Activated CD4-positive, alpha-beta memory T cell treated with anti-CD3 and anti-CD28 coated beads for 36 hours (primary cell): ENCODE measurements at regions of chr14 and their contacts with region 1.

Region 1: GRCh38 chr14:34714320-34715126 is at the start of gene CFL2:
- DNase-seq: peak; percentile 79
- H3K4me3 Mint-ChIP-seq: peak within 1 kb of the TSS; percentile 94
- H3K27ac Mint-ChIP-seq: peak within 1 kb of the TSS; percentile 89
- H3K4me1 Mint-ChIP-seq: peaks cover 24% of the 10 kb centered on the region
- H3K27me3 Mint-ChIP-seq: peaks cover 1% of the 10 kb centered on the region
- total RNA-seq, gene CFL2: 7.6 to 8.8 TPM

Region 2: DNA sequence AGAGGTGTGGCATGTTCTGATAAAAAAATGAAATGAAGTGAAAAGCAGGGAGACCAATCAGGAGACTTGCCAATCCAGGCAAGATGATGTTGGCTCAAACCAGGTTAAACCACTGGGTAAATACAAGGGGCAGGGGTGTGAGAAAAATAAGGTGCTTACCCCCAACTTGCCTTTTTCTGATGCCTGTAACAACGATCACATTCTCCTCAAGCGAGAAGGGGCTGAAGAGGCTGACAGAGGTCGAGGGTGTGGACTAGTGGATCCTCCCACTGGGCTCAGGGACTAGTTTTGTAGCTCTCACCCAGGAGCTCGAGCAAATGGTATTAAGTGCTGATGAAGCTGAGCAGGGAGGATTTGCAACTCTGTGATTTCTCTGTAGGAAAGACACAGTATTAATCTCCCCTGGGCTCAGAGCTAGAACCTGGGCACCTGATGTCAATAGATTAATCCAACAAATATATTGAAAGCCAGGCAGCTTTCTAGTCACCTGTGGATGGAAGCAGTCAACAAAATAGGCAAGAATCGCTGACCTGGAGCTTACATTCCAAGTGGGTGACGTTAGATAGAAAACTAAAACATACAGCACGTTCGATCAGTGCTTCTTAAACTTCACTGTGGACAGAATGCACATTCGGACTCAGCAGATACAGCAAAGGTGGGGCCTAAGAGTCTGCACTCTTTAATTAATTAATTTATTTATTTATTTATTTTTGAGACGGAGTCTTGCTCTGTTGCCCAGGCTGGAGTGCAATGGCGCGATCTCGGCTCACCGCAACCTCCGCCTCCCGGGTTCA is 159.8 kb before region 1 on chr14:
- CTCF ChIA-PET with region 1: no interaction called
- POLR2A ChIA-PET with region 1: no interaction called
- intact Hi-C with region 1: no loop called
- DNase-seq: peak; percentile 13
- H3K4me3 Mint-ChIP-seq: peak overlapping the region; percentile 38
- H3K27ac Mint-ChIP-seq: peak overlapping the region; percentile 36
- H3K4me1 Mint-ChIP-seq: peaks cover 18% of the 10 kb centered on the region
- H3K27me3 Mint-ChIP-seq: no peaks in the 10 kb centered on the region

Region 3: DNA sequence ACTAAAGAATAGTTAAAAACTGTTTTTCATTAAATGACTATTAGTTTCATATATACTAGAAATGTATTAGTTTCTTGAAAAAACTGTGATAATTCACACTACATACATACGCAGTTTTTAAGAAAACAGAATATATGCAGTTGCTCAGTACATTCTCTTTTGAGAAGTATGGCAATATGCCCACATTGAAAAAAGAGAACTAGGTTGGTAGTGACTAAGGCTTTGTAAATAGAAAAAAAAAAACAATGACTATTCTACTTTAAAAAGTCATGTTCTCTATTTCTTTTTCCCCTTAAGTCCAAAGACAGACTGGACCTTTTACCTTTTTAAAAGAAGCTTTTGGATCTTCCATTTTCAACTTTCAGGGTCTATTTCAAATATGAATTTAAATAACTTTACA is 109.5 kb before region 1 on chr14:
- CTCF ChIA-PET with region 1: no interaction called
- POLR2A ChIA-PET with region 1: no interaction called
- intact Hi-C with region 1: no loop called
- DNase-seq: no peak
- H3K4me3 Mint-ChIP-seq: no peak overlapping the region
- H3K27ac Mint-ChIP-seq: no peak overlapping the region
- H3K4me1 Mint-ChIP-seq: peaks cover 3% of the 10 kb centered on the region
- H3K27me3 Mint-ChIP-seq: no peaks in the 10 kb centered on the region

Region 4: GRCh38 chr14:34629657-34630529 is 84.6 kb before region 1 on chr14 and contains the start of gene SNX6:
- CTCF ChIA-PET with region 1: no interaction called
- POLR2A ChIA-PET with region 1: no interaction called
- intact Hi-C with region 1: loop called (anchors 1 kb)
- DNase-seq: peak; percentile 89
- H3K4me3 Mint-ChIP-seq: peak within 1 kb of the TSS; percentile 90
- H3K27ac Mint-ChIP-seq: peak within 1 kb of the TSS; percentile 87
- H3K4me1 Mint-ChIP-seq: peaks cover 29% of the 10 kb centered on the region
- H3K27me3 Mint-ChIP-seq: peaks cover 2% of the 10 kb centered on the region
- total RNA-seq, gene SNX6: 82.0 to 86.9 TPM

Region 5: GRCh38 chr14:34671716-34672115 is 42.8 kb before region 1 on chr14:
- CTCF ChIA-PET with region 1: interaction called, 38 read pairs
- POLR2A ChIA-PET with region 1: no interaction called
- intact Hi-C with region 1: loop called (anchors 2 kb)
- DNase-seq: no peak
- H3K4me3 Mint-ChIP-seq: no peak overlapping the region
- H3K27ac Mint-ChIP-seq: no peak overlapping the region
- H3K4me1 Mint-ChIP-seq: peaks cover 3% of the 10 kb centered on the region
- H3K27me3 Mint-ChIP-seq: no peaks in the 10 kb centered on the region

Region 6: DNA sequence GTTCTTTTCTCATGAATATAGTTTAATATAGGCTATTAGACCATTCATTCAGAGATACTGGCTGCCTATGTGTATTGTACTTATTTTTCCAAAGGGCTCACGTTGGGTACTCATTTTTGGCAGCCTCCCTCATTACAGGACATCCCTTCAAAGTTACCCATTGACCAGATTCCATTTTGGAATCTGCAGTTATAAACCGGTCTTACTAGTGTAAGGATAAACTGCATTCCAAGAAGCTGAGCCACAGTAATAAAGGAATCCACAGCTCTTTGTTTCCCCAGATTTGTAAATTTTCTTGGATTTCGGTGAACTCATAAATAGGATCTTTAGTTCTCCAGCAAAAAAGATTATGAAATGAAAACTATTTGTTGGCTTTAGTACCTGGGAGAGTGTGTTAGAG is 18.7 kb after region 1 on chr14:
- CTCF ChIA-PET with region 1: no interaction called
- POLR2A ChIA-PET with region 1: no interaction called
- intact Hi-C with region 1: no loop called
- DNase-seq: no peak
- H3K4me3 Mint-ChIP-seq: no peak overlapping the region
- H3K27ac Mint-ChIP-seq: no peak overlapping the region
- H3K4me1 Mint-ChIP-seq: no peaks in the 10 kb centered on the region
- H3K27me3 Mint-ChIP-seq: peaks cover 1% of the 10 kb centered on the region

Region 7: DNA sequence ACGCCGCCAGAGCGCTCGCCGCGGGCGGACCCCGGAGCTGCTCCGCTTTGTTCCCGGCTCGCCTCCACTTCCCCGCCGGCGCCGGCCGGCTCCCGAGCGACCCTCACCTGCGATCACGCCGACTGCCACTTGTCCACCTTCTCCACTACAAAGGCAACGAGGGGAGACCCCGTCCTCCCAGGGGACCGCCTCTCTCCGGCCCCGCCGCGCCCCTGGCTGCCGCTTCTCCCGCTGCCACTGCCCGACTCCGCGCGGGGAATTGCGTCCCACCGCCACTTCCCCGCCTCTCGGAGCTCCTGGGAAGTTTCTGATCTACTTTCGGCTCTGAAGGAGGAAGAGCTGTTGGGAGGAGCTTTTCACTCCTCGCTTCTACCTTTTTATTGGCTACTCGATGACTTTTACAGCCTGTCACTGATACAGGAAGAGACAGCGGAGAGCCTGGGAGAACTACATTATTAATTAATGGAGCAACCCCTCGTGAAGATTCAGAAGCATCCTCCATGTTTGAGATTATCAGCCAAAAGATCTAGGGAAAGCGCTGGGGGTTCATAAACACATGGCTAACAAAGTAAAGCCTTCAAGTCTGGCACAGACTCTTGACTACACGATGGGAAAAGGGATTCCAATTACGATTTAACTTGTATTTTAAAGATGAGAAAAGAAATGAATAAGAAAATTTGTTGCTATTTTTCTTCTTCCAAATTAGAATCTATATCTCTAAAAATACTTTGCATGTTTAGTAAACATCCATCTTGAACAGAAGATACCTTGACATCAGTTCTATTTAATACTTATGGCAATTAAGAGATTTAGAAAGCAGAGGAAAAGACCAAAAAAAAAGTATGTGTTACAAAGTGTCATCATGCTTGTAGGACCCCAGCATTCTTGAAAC is 160.8 kb after region 1 on chr14 and contains the start of gene BAZ1A:
- CTCF ChIA-PET with region 1: no interaction called
- POLR2A ChIA-PET with region 1: interaction called, 3 read pairs
- intact Hi-C with region 1: loop called (anchors 1 kb)
- DNase-seq: peak; percentile 52
- H3K4me3 Mint-ChIP-seq: peak within 1 kb of the TSS; percentile 100
- H3K27ac Mint-ChIP-seq: peak within 1 kb of the TSS; percentile 98
- H3K4me1 Mint-ChIP-seq: peaks cover 33% of the 10 kb centered on the region
- H3K27me3 Mint-ChIP-seq: no peaks in the 10 kb centered on the region
- total RNA-seq, gene BAZ1A: 67.8 to 68.0 TPM

Region 8: DNA sequence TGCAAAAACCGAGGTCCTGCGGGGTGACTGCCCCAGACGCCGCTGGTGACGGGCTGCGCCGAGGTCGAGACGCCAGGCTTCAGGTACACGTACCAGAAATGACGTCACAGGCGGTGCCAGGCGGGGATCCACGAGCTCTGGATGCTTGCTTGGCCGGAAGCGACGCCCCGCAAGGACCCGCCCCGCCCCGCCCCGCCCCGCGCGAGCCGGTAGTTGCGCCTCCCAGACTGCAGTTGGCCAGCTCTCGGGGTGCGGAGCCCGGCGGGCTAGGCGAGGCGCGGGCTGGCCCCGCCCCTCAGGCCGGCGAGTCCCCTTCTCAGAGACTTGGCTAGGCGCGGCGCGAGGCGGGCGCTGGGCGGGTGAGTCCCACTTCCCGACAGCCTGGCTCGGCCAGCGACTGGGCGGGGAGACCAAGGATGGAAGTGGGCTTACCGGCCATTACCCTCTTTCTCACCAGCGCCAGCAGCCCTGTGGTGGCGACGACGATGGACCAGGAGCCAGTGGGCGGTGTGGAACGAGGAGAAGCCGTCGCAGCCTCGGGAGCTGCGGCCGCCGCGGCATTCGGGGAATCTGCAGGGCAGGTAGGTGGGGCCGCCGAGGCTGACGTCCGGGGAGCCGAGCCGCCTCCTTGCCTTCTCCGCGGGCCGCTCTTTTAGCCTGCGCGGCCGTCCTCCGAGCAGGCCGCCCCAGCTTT is 331.7 kb after region 1 on chr14 and contains the start of gene FAM177A1:
- CTCF ChIA-PET with region 1: no interaction called
- POLR2A ChIA-PET with region 1: no interaction called
- intact Hi-C with region 1: loop called (anchors 2 kb)
- DNase-seq: peak; percentile 99
- H3K4me3 Mint-ChIP-seq: peak within 1 kb of the TSS; percentile 97
- H3K27ac Mint-ChIP-seq: peak within 1 kb of the TSS; percentile 98
- H3K4me1 Mint-ChIP-seq: peaks cover 28% of the 10 kb centered on the region
- H3K27me3 Mint-ChIP-seq: no peaks in the 10 kb centered on the region
- total RNA-seq, gene FAM177A1: 48.8 to 56.8 TPM

Region 9: DNA sequence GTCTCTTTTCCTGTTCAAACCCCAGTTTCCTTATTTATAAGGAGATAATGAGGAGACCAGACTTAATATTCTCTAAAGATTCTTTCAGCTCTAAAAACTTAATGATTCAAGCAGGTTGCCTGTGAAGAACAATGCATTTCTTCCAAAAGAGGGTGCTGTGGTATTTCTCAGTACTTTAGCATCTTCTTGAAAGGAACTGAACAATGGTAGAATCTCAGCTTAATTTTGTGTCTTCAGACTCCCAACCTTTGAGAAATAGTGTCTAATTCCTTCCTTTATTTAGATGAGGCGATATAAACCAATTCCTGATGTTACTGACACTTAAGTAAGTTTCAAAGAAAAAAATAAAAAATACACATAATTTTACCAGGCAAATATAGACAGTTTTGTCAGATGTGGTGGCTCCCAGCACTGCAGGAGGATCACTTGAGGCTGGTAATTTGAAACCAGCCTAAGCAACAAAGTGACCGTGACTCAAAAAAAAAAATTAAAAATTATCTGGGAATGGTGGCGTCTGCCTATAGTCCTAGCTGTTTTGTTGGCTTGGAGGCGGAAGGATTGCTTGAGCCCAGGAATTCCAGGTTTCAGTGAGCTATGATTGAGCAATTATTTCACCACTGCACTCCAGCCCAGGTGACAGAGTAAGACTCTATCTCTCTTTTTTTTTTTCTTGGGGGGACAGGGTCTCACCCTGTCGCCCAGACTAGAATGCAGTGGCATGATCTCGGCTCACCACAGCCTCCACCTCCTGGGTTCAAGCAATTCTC is 500.8 kb after region 1 on chr14:
- CTCF ChIA-PET with region 1: no interaction called
- POLR2A ChIA-PET with region 1: no interaction called
- intact Hi-C with region 1: no loop called
- DNase-seq: no peak
- H3K4me3 Mint-ChIP-seq: no peak overlapping the region
- H3K27ac Mint-ChIP-seq: no peak overlapping the region
- H3K4me1 Mint-ChIP-seq: peaks cover 20% of the 10 kb centered on the region
- H3K27me3 Mint-ChIP-seq: no peaks in the 10 kb centered on the region